Activated CD4-positive, alpha-beta T cell treated with anti-CD3 and anti-CD28 coated beads, Interleukin-2, amount 10 ng/mL, durations not matched to agents 24 days and 14 days (primary cell): ENCODE measurements at regions of chr12 and their contacts with region 1.

Region 1: GRCh38 chr12:122871851-122872780 is 23.8 kb downstream of the VPS37B start:
- DNase-seq: peak; percentile 84
- H3K4me3 Mint-ChIP-seq: peak overlapping the region; percentile 79
- H3K27ac Mint-ChIP-seq: peak overlapping the region; percentile 76
- H3K4me1 Mint-ChIP-seq: peaks cover 55% of the 10 kb centered on the region
- H3K27me3 Mint-ChIP-seq: peaks cover 16% of the 10 kb centered on the region

Region 2: DNA sequence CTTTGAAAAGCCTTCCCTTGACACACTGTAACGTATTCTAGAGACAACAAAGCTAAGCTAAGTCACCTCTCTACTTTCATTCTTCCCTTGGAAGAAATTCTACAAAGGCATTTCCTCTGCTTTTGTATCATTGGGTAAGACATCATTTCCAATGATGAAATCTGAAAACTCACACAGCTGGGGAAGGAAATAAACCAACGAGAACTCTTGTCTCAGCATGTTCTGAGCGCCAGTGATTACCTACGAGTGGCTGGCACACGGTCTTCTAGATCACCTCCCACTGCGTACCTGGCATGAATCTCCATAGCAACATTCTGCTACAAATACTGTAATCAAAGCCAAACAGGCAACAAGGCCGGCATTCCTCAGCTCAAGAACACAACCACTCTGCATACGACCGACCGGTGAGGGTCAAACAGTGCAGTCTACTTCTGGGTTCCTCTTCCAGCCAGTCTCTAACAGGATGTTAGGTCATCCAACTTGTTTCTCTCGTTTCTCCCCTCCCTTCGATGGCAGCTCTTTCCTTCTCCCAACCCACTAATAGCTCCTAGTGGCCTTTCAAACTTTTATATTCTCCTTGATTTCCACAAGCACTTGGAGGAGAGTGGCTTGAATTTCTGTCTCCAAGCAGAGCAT is 16.2 kb after region 1 on chr12:
- intact Hi-C with region 1: loop called (anchors 1 kb)
- DNase-seq: peak; percentile 85
- H3K4me3 Mint-ChIP-seq: peak overlapping the region; percentile 77
- H3K27ac Mint-ChIP-seq: peak overlapping the region; percentile 91
- H3K4me1 Mint-ChIP-seq: peaks cover 55% of the 10 kb centered on the region
- H3K27me3 Mint-ChIP-seq: peaks cover 7% of the 10 kb centered on the region

Region 3: GRCh38 chr12:122895705-122896636 is 23.9 kb after region 1 on chr12 and contains the start of gene VPS37B:
- intact Hi-C with region 1: loop called (anchors 2 kb)
- DNase-seq: peak; percentile 97
- H3K4me3 Mint-ChIP-seq: peak within 1 kb of the TSS; percentile 94
- H3K27ac Mint-ChIP-seq: peak within 1 kb of the TSS; percentile 90
- H3K4me1 Mint-ChIP-seq: peaks cover 73% of the 10 kb centered on the region
- H3K27me3 Mint-ChIP-seq: peaks cover 6% of the 10 kb centered on the region
- total RNA-seq, gene VPS37B: 9.2 and 9.5 TPM in 2 replicates

Region 4: GRCh38 chr12:122946690-122947341 is 74.7 kb after region 1 on chr12:
- intact Hi-C with region 1: loop called (anchors 1 kb)
- DNase-seq: peak; percentile 93
- H3K4me3 Mint-ChIP-seq: peak overlapping the region; percentile 84
- H3K27ac Mint-ChIP-seq: peak overlapping the region; percentile 88
- H3K4me1 Mint-ChIP-seq: peaks cover 29% of the 10 kb centered on the region
- H3K27me3 Mint-ChIP-seq: peaks cover 2% of the 10 kb centered on the region

Region 5: GRCh38 chr12:122963953-122964301 is 91.8 kb after region 1 on chr12:
- intact Hi-C with region 1: no loop called
- DNase-seq: no peak
- H3K4me3 Mint-ChIP-seq: no peak overlapping the region
- H3K27ac Mint-ChIP-seq: no peak overlapping the region
- H3K4me1 Mint-ChIP-seq: peaks cover 4% of the 10 kb centered on the region
- H3K27me3 Mint-ChIP-seq: no peaks in the 10 kb centered on the region